ENCODE measurements at regions of chr16 and their contacts with region 1.

Region 1: DNA sequence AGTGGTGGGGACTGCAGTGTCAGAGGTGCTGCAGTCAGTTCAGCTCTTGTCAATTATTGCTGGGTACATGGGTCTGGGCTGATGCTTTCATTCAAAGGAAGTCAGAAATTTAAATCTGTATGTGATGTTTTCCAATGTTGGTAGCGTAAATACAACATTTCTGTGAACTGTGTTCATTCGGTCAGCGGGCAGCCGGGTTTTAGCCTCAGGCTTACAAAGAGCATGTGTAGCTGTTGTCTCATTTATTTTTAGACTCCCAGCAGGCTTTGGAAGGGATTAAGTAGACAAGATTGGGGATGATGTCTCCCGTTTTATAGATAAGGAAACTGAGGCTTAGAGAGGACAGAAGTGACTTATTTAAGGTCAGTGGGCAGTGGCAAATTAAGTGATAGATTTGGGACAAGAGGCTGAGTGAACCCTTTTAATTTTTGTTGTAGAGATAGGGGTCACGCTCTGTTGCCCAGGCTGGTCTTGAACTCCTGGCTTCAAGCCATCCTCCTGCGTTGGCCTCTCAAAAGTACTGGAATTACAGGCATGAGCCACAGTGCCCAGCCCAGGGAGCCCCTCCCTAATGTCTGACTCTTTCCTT is 8.1 kb downstream of the AQP8 start:
- DNase-seq: no peak
- H3K4me3 Mint-ChIP-seq: no peak overlapping the region
- H3K27ac Mint-ChIP-seq: no peak overlapping the region
- H3K4me1 Mint-ChIP-seq: no peaks in the 10 kb centered on the region
- H3K27me3 Mint-ChIP-seq: no peaks in the 10 kb centered on the region

Region 2: GRCh38 chr16:25051406-25052150 is 173.2 kb before region 1 on chr16:
- CTCF ChIA-PET with region 1: interaction called, 40 read pairs
- POLR2A ChIA-PET with region 1: no interaction called
- intact Hi-C with region 1: loop called (anchors 1 kb)
- DNase-seq: no peak
- H3K4me3 Mint-ChIP-seq: peak overlapping the region; percentile 54
- H3K27ac Mint-ChIP-seq: peak overlapping the region; percentile 74
- H3K4me1 Mint-ChIP-seq: peaks cover 47% of the 10 kb centered on the region
- H3K27me3 Mint-ChIP-seq: no peaks in the 10 kb centered on the region

Region 3: GRCh38 chr16:25111403-25112166 is 113.2 kb before region 1 on chr16 and contains the start of gene LCMT1:
- CTCF ChIA-PET with region 1: interaction called, 11 read pairs
- POLR2A ChIA-PET with region 1: no interaction called
- intact Hi-C with region 1: no loop called
- DNase-seq: peak; percentile 96
- H3K4me3 Mint-ChIP-seq: peak within 1 kb of the TSS; percentile 95
- H3K27ac Mint-ChIP-seq: peak within 1 kb of the TSS; percentile 94
- H3K4me1 Mint-ChIP-seq: peaks cover 58% of the 10 kb centered on the region
- H3K27me3 Mint-ChIP-seq: no peaks in the 10 kb centered on the region
- total RNA-seq, gene LCMT1: 47.2 to 50.1 TPM

Region 4: GRCh38 chr16:25177831-25178688 is 46.8 kb before region 1 on chr16:
- CTCF ChIA-PET with region 1: interaction called, 10 read pairs
- POLR2A ChIA-PET with region 1: no interaction called
- intact Hi-C with region 1: no loop called
- DNase-seq: no peak
- H3K4me3 Mint-ChIP-seq: no peak overlapping the region
- H3K27ac Mint-ChIP-seq: no peak overlapping the region
- H3K4me1 Mint-ChIP-seq: peaks cover 13% of the 10 kb centered on the region
- H3K27me3 Mint-ChIP-seq: no peaks in the 10 kb centered on the region

Region 5: GRCh38 chr16:25235991-25236390 is 11.2 kb after region 1 on chr16:
- CTCF ChIA-PET with region 1: interaction called, 11 read pairs
- POLR2A ChIA-PET with region 1: no interaction called
- intact Hi-C with region 1: no loop called
- DNase-seq: no peak
- H3K4me3 Mint-ChIP-seq: no peak overlapping the region
- H3K27ac Mint-ChIP-seq: no peak overlapping the region
- H3K4me1 Mint-ChIP-seq: no peaks in the 10 kb centered on the region
- H3K27me3 Mint-ChIP-seq: no peaks in the 10 kb centered on the region

Region 6: GRCh38 chr16:25443994-25444393 is 219.2 kb after region 1 on chr16:
- CTCF ChIA-PET with region 1: no interaction called
- POLR2A ChIA-PET with region 1: no interaction called
- intact Hi-C with region 1: no loop called
- DNase-seq: no peak
- H3K4me3 Mint-ChIP-seq: no peak overlapping the region
- H3K27ac Mint-ChIP-seq: no peak overlapping the region
- H3K4me1 Mint-ChIP-seq: no peaks in the 10 kb centered on the region
- H3K27me3 Mint-ChIP-seq: peaks cover 13% of the 10 kb centered on the region

Measured in activated CD4-positive, alpha-beta memory T cell treated with anti-CD3 and anti-CD28 coated beads for 36 hours (primary cell).